ENCODE measurements at regions of chr10 and their contacts with region 1.

Region 1: GRCh38 chr10:32210306-32211045 is 136.5 kb downstream of the EPC1 start:
- DNase-seq: peak; percentile 53 to 67 (median 66)
- H3K4me3 ChIP-seq: no peak overlapping the region
- H3K27ac ChIP-seq: no peak overlapping the region
- H3K4me1 ChIP-seq: peaks cover 0 to 4% (median 0%) of the 10 kb centered on the region in 4 experiments
- H3K27me3 ChIP-seq: no peaks in the 10 kb centered on the region

Region 2: DNA sequence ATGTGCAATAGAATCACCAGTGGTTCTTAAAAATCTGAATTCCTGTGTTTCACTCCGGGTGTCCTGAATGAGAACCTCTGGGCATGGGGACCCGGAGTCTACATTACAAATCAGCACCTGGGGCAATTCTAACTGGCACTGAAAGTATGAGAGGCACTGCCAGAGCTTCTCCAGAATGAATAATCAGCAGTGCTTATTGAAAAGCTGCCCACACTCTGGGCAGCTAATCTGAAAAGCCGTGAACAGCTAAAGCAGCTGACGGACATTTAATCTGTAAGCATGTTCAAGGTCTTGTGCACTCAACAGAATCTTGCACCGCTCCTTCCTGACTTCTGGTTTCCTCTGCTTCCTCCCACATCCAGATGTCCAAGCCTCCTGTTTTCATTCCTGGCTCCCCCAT is 40.9 kb before region 1 on chr10:
- CTCF ChIA-PET with region 1: no interaction called
- POLR2A ChIA-PET with region 1: no interaction called
- DNase-seq: no peak
- H3K4me3 ChIP-seq: peak overlapping the region in 1 of 7 experiments; percentile 5
- H3K27ac ChIP-seq: no peak overlapping the region
- H3K4me1 ChIP-seq: peaks cover 0 to 5% (median 2%) of the 10 kb centered on the region in 4 experiments
- H3K27me3 ChIP-seq: no peaks in the 10 kb centered on the region

Region 3: DNA sequence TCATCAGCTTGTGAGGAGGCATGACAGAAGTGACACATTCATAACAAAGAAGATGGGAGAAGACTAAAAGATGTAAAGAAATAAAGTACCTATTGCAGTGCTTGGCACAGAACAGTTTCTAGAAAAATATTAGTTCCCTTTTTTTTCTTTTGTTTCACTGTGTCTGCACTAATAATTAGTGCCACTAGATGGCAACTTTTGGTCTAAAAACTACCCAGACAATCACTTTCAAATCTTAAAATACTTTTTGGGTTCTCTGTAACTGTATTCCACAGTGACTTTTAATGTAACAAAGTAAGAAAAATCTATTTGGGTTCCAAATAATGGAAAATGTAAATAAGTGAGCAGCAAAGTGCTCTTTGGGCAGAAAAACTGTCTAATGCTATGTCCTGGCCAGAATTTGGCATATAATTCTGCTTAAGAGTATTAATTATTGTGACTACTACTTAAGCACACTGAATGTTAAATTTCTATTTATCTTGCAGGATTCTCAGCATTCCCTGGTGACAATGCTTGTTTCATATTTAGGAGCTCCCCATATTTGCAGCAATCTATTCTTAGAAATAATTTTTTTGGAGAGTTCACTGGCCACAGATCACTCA is 19.5 kb before region 1 on chr10:
- CTCF ChIA-PET with region 1: interaction called, 13 read pairs
- POLR2A ChIA-PET with region 1: no interaction called
- DNase-seq: peak; percentile 60 to 77 (median 68)
- H3K4me3 ChIP-seq: no peak overlapping the region
- H3K27ac ChIP-seq: no peak overlapping the region
- H3K4me1 ChIP-seq: peaks cover 0 to 2% (median under 1%) of the 10 kb centered on the region in 4 experiments
- H3K27me3 ChIP-seq: peaks cover 0 to 8% (median 0%) of the 10 kb centered on the region in 5 experiments

Region 4: GRCh38 chr10:32229170-32229569 is 18.7 kb after region 1 on chr10:
- CTCF ChIA-PET with region 1: no interaction called
- POLR2A ChIA-PET with region 1: no interaction called
- DNase-seq: no peak
- H3K4me3 ChIP-seq: no peak overlapping the region
- H3K27ac ChIP-seq: no peak overlapping the region
- H3K4me1 ChIP-seq: no peaks in the 10 kb centered on the region
- H3K27me3 ChIP-seq: no peaks in the 10 kb centered on the region